ENCODE measurements at regions of chr2 and their contacts with region 1.

Region 1: GRCh38 chr2:231463698-231464575 is at the start of gene NCL:
- DNase-seq: peak; percentile 88
- ATAC-seq: peak; percentile 93
- H3K4me3 Mint-ChIP-seq: peak within 1 kb of the TSS; percentile 99
- H3K27ac Mint-ChIP-seq: peak within 1 kb of the TSS; percentile 100
- H3K4me1 Mint-ChIP-seq: peaks cover 37% of the 10 kb centered on the region
- H3K27me3 Mint-ChIP-seq: no peaks in the 10 kb centered on the region
- total RNA-seq, gene NCL: 461 to 462 TPM

Region 2: GRCh38 chr2:231425811-231426728 is 37.9 kb before region 1 on chr2:
- POLR2A ChIA-PET with region 1: no interaction called
- DNase-seq: no peak
- ATAC-seq: peak; percentile 69
- H3K4me3 Mint-ChIP-seq: no peak overlapping the region
- H3K27ac Mint-ChIP-seq: peak overlapping the region; percentile 77
- H3K4me1 Mint-ChIP-seq: peaks cover 5% of the 10 kb centered on the region
- H3K27me3 Mint-ChIP-seq: peaks cover 3% of the 10 kb centered on the region

Region 3: GRCh38 chr2:231452799-231453508 is 11.0 kb before region 1 on chr2:
- POLR2A ChIA-PET with region 1: interaction called, 43 read pairs
- DNase-seq: no peak
- ATAC-seq: no peak
- H3K4me3 Mint-ChIP-seq: no peak overlapping the region
- H3K27ac Mint-ChIP-seq: peak overlapping the region; percentile 40
- H3K4me1 Mint-ChIP-seq: peaks cover 15% of the 10 kb centered on the region
- H3K27me3 Mint-ChIP-seq: no peaks in the 10 kb centered on the region

Region 4: GRCh38 chr2:231475965-231476364 is 12.0 kb after region 1 on chr2:
- POLR2A ChIA-PET with region 1: interaction called, 76 read pairs
- DNase-seq: no peak
- ATAC-seq: no peak
- H3K4me3 Mint-ChIP-seq: no peak overlapping the region
- H3K27ac Mint-ChIP-seq: no peak overlapping the region
- H3K4me1 Mint-ChIP-seq: peaks cover 8% of the 10 kb centered on the region
- H3K27me3 Mint-ChIP-seq: peaks cover 2% of the 10 kb centered on the region

Region 5: GRCh38 chr2:231482806-231483391 is 19.0 kb after region 1 on chr2:
- POLR2A ChIA-PET with region 1: interaction called, 76 read pairs
- DNase-seq: peak; percentile 85
- ATAC-seq: peak; percentile 83
- H3K4me3 Mint-ChIP-seq: peak overlapping the region; percentile 82
- H3K27ac Mint-ChIP-seq: peak overlapping the region; percentile 91
- H3K4me1 Mint-ChIP-seq: peaks cover 12% of the 10 kb centered on the region
- H3K27me3 Mint-ChIP-seq: no peaks in the 10 kb centered on the region

Region 6: DNA sequence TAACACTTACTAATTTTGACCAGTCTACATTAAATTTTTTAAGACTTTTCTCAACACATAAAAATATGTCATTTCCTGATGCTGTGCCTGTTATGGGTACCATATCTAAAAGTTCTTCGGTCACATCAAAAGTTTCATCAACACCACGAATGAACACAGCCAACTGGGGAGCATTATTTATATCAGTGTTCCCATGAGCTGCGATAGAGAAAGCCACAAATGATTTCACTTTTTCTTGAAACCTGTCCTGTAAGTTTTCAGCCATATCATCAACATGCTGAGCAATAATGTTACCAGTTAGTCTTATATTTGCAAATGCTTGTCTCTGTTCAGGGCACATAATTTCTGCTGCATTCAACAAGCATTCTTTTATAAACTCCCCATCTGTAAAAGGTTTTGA is 30.7 kb after region 1 on chr2:
- POLR2A ChIA-PET with region 1: no interaction called
- DNase-seq: no peak
- ATAC-seq: no peak
- H3K4me3 Mint-ChIP-seq: no peak overlapping the region
- H3K27ac Mint-ChIP-seq: no peak overlapping the region
- H3K4me1 Mint-ChIP-seq: no peaks in the 10 kb centered on the region
- H3K27me3 Mint-ChIP-seq: no peaks in the 10 kb centered on the region

Region 7: DNA sequence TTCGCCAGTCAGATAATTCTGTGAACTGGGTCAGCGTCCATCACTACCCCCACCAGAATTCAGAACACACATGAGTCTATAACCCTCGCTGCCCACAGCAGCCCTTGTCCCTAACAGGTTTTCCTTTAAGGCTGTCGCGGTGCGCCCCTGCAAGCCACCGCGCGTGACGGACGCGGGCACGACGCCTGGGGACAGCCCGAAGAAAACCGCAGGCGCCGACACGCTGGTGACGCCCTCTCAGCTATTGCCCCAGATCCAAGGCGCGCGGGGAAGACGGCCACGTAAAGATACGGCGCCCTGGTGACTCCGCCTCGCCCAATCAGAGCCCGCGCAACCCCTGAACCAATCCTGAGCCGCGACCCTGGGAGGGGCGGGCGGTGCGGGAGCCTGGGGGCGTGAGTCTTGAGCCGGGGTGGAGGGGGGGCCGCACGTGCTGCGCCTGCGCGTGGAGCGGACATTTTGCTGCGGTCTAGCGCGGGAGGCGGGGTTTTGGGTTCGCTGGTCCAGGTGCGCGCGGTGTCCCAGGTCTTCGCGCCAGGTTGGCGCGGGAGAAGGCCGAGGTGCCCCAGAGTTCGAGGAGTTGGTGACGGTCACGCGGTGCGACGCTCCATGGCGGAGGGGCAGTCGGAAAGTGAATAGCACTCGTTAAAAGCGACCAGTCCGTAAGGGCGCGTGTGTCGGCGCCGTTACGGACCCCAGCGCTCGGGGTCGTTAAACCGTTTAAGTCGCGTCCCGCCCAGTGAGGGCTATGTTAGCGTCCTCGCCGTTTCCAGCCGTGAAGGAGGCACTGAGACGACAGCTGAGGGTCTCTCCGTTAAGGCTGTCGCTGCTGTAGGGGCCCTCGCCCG is 50.4 kb after region 1 on chr2:
- POLR2A ChIA-PET with region 1: interaction called, 24 read pairs
- DNase-seq: peak; percentile 97
- ATAC-seq: peak; percentile 100
- H3K4me3 Mint-ChIP-seq: peak overlapping the region; percentile 89
- H3K27ac Mint-ChIP-seq: peak overlapping the region; percentile 92
- H3K4me1 Mint-ChIP-seq: peaks cover 19% of the 10 kb centered on the region
- H3K27me3 Mint-ChIP-seq: peaks cover 16% of the 10 kb centered on the region

Region 8: DNA sequence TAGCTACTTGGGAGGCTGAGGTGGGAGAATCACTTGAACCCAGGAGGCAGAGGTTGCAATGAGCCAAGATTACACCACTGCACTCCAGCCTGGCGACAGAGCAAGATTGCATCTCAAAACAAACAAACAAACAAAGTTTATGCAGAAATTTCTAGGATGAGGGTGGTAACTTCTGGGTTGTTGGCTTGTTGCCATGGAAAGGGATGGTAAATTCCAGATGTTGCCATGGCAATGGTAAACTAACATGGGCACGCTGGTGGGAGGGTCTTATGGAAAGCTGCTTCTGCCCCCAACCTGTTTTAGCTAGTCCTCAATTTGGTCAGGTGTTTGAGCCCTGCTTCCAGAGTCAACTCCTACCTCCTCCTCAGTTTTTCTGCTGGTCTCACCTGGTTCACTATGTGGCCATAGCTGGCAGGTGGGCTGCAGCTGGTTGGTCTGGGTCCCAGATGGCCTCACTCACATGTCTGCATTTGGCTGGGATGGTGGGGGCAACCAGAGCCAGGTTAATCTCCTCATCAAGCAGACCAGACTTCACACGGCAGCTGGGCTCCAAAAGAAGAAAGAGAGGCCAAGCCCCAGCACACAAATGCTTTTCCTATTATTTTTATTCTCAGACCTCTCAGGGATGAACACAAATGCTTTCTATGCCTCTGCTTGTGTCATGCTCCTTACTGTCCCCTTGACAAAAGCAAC is 102.1 kb after region 1 on chr2:
- POLR2A ChIA-PET with region 1: no interaction called
- DNase-seq: no peak
- ATAC-seq: no peak
- H3K4me3 Mint-ChIP-seq: no peak overlapping the region
- H3K27ac Mint-ChIP-seq: no peak overlapping the region
- H3K4me1 Mint-ChIP-seq: peaks cover 5% of the 10 kb centered on the region
- H3K27me3 Mint-ChIP-seq: peaks cover 11% of the 10 kb centered on the region

Region 9: DNA sequence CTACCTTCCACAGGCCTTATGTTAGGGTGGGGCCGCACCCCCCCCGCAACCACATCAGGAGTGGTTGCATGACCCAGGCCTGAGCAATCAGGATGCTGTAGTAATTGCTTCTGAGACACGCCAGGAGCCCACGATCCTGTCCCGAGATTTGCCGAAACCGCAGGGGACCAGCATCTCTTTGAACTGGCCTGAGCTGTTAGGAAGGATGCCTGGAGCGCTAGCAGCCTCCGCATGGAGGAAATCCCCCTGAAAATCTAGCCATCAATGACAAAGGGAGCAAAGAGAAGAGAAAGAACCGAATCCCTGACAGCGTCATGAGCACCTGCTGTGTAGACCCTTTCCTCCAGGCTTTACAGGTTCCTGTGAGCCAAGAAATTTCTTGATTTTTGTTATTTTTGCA is 120.0 kb after region 1 on chr2:
- POLR2A ChIA-PET with region 1: no interaction called
- DNase-seq: no peak
- ATAC-seq: no peak
- H3K4me3 Mint-ChIP-seq: no peak overlapping the region
- H3K27ac Mint-ChIP-seq: no peak overlapping the region
- H3K4me1 Mint-ChIP-seq: peaks cover 2% of the 10 kb centered on the region
- H3K27me3 Mint-ChIP-seq: peaks cover 3% of the 10 kb centered on the region